CD8-positive, alpha-beta T cell (primary cell): ENCODE measurements at regions of chr2 and their contacts with region 1.

Region 1: GRCh38 chr2:112481050-112481527 is 867 bp upstream of the TTL start:
- DNase-seq: peak; percentile 63 to 90 (median 84)
- ATAC-seq: peak; percentile 78
- H3K4me3 ChIP-seq: peak overlapping the region; percentile 56 to 87
- H3K4me3 Mint-ChIP-seq: peak overlapping the region; percentile 95
- H3K27ac ChIP-seq: peak overlapping the region; percentile 30 to 53
- H3K27ac Mint-ChIP-seq: peak overlapping the region; percentile 93
- H3K4me1 ChIP-seq: peaks cover 16% of the 10 kb centered on the region
- H3K4me1 Mint-ChIP-seq: peaks cover 21% of the 10 kb centered on the region
- H3K27me3 ChIP-seq: no peaks in the 10 kb centered on the region
- H3K27me3 Mint-ChIP-seq: no peaks in the 10 kb centered on the region
- CTCF ChIP-seq: peak; percentile 76

Region 2: GRCh38 chr2:111227716-111228141 is 1253.4 kb before region 1 on chr2:
- CTCF ChIA-PET with region 1: no interaction called
- POLR2A ChIA-PET with region 1: no interaction called
- intact Hi-C with region 1: no loop called
- DNase-seq: no peak
- ATAC-seq: no peak
- H3K4me3 ChIP-seq: no peak overlapping the region
- H3K4me3 Mint-ChIP-seq: no peak overlapping the region
- H3K27ac ChIP-seq: no peak overlapping the region
- H3K27ac Mint-ChIP-seq: no peak overlapping the region
- H3K4me1 ChIP-seq: no peaks in the 10 kb centered on the region
- H3K4me1 Mint-ChIP-seq: no peaks in the 10 kb centered on the region
- H3K27me3 ChIP-seq: no peaks in the 10 kb centered on the region
- H3K27me3 Mint-ChIP-seq: peaks cover 12% of the 10 kb centered on the region
- CTCF ChIP-seq: no peak

Region 3: DNA sequence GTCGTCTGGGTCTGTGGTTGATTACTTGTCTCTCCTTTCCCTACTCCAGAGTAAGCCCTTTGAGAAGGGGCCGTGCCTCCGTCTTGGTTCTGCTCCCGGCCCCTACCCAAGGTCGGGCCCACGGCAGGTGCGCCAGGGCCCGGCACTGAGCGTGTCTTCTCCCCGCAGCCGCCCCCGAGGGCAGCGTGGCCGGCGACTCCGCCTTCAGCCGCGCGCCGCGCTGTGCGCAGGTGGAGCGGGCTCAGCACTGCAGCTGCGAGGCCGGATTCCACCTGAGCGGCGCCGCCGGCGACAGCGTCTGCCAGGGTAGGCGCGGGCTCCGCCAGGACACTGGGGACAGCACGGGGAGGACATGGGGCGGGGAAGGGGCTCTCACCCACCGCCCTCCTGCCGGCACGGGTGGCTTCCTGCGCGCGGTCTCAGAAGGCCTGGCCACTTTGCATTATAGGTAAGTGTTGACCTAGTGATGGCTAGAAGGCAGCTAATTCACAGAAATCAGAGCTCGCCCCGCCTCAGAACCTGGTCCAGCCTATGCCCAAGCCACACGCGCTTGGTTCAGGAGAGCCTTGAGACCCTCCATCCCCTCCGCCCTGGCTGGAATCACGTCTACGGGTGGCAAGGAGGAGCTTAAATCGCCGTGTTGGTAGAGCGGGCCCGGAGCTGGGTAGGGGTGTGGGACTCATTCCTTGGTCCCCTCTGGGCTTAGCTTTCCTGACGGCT is 299.4 kb before region 1 on chr2:
- CTCF ChIA-PET with region 1: no interaction called
- POLR2A ChIA-PET with region 1: no interaction called
- intact Hi-C with region 1: no loop called
- DNase-seq: peak in 8 of 9 experiments; percentile 26 to 74 (median 52)
- ATAC-seq: peak; percentile 87
- H3K4me3 ChIP-seq: peak overlapping the region; percentile 8 to 11
- H3K4me3 Mint-ChIP-seq: peak overlapping the region; percentile 74
- H3K27ac ChIP-seq: no peak overlapping the region
- H3K27ac Mint-ChIP-seq: peak overlapping the region; percentile 82
- H3K4me1 ChIP-seq: peaks cover 15% of the 10 kb centered on the region
- H3K4me1 Mint-ChIP-seq: peaks cover 41% of the 10 kb centered on the region
- H3K27me3 ChIP-seq: no peaks in the 10 kb centered on the region
- H3K27me3 Mint-ChIP-seq: peaks cover 10% of the 10 kb centered on the region
- CTCF ChIP-seq: no peak

Region 4: DNA sequence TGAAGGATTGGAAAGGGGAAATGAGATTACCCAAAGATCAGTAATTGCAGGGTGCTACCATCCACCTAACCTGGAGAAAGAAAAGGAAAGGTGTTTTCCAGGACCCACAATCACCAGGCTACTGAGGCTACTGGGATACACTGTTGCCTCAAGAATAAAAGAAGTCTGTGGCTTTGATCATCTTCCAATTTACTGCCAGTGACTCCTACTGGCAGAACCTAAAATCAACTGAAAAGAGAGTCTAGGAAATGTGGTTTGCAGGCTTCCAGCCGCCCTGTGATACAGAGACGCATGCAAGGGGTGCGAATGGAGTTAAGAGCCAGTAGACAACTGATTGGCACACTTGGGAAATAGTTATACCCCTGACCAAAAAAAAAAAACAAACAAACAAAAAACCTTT is 15.7 kb before region 1 on chr2:
- CTCF ChIA-PET with region 1: interaction called, 16 read pairs
- POLR2A ChIA-PET with region 1: no interaction called
- intact Hi-C with region 1: no loop called
- DNase-seq: no peak
- ATAC-seq: no peak
- H3K4me3 ChIP-seq: no peak overlapping the region
- H3K4me3 Mint-ChIP-seq: no peak overlapping the region
- H3K27ac ChIP-seq: no peak overlapping the region
- H3K27ac Mint-ChIP-seq: no peak overlapping the region
- H3K4me1 ChIP-seq: no peaks in the 10 kb centered on the region
- H3K4me1 Mint-ChIP-seq: no peaks in the 10 kb centered on the region
- H3K27me3 ChIP-seq: peaks cover 0 to 3% of the 10 kb centered on the region in 2 experiments
- H3K27me3 Mint-ChIP-seq: peaks cover 17% of the 10 kb centered on the region
- CTCF ChIP-seq: no peak

Region 5: DNA sequence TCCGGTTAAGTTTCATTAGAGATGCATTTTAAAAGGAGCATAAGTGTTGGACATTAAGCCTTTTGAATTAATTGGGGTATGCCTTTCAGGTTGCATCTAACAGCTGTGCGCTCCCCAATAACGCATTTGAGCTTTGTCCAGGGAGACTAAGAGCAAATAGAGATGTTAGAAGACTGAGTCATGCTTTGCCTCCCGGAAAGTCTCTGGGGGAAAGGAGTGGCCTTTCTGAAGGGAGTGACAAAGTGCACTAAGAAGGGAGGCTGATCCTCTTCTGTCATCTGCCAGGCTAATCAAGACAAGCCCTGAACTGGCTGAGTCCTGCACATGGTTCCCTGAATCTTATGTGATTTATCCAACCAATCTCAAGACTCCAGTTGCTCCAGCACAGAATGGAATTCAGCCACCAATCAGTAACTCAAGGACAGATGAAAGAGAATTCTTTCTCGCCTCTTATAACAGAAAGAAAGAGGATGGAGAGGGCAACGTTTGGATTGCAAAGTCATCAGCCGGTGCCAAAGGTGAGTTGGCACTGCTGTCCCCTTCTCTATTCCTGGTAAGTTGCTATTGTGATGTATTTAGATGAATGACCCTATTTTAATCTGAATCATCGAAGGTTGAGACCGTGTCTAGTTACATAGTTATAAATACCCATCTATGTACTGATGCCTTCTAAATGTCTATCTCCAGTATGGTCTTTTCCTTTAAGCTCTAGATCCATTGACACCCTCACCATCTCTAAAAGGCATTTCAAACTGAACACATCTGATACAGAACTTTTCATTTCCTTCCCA is 13.0 kb after region 1 on chr2:
- CTCF ChIA-PET with region 1: interaction called, 30 read pairs
- POLR2A ChIA-PET with region 1: no interaction called
- intact Hi-C with region 1: no loop called
- DNase-seq: no peak
- ATAC-seq: no peak
- H3K4me3 ChIP-seq: no peak overlapping the region
- H3K4me3 Mint-ChIP-seq: no peak overlapping the region
- H3K27ac ChIP-seq: no peak overlapping the region
- H3K27ac Mint-ChIP-seq: no peak overlapping the region
- H3K4me1 ChIP-seq: no peaks in the 10 kb centered on the region
- H3K4me1 Mint-ChIP-seq: no peaks in the 10 kb centered on the region
- H3K27me3 ChIP-seq: no peaks in the 10 kb centered on the region
- H3K27me3 Mint-ChIP-seq: no peaks in the 10 kb centered on the region
- CTCF ChIP-seq: no peak

Region 6: DNA sequence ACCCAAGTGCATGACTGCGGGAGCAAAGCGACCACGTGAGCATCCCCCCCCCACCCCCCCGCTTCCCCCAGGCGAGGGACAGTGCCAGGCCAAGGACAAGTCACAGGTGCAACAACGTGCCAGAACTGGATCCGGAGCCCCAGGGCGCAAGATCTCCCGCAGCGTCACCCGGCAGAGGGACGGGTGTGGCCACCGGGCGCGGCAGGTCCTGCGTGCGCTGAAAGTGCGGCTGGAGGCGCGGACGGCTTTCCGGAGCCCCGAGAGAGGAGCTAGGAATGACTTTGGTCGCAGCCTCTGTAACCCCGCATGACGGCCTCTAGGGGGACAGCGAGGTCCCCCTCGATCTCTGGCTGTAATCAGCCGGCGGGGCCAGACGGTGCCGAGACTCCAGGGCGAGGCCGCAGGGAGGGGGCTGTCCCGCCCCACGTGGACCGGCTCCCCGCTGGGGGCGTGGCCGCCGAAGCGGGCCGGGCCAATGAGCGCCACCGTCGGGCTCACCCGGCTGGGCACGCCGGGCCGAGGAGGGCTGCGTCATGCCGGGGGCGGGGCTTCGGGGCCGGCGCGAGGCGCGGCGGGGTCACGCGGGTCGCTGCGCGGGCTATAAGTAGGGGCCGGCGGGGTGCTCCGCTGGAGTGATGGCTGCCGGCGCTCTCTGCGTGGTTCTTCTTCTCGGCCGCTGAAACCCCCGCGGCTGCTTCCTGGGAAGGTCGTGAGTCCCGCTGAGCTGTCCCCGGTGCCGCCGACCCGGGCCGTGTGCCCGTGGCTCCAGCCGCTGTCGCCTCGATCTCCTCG is 164.4 kb after region 1 on chr2 and contains the start of gene SLC20A1:
- CTCF ChIA-PET with region 1: no interaction called
- POLR2A ChIA-PET with region 1: no interaction called
- intact Hi-C with region 1: loop called in 1 of 2 experiments (anchors 1 kb)
- DNase-seq: peak; percentile 96 to 100 (median 98)
- ATAC-seq: peak; percentile 91
- H3K4me3 ChIP-seq: peak within 1 kb of the TSS; percentile 84 to 90
- H3K4me3 Mint-ChIP-seq: peak within 1 kb of the TSS; percentile 85
- H3K27ac ChIP-seq: peak within 1 kb of the TSS; percentile 91
- H3K27ac Mint-ChIP-seq: peak within 1 kb of the TSS; percentile 89
- H3K4me1 ChIP-seq: peaks cover 50% of the 10 kb centered on the region
- H3K4me1 Mint-ChIP-seq: peaks cover 56% of the 10 kb centered on the region
- H3K27me3 ChIP-seq: no peaks in the 10 kb centered on the region
- H3K27me3 Mint-ChIP-seq: no peaks in the 10 kb centered on the region
- CTCF ChIP-seq: peak; percentile 55
- total RNA-seq, gene SLC20A1: 144 to 145 TPM